MCF 10A (cell line): ENCODE measurements at regions of chr12 and their contacts with region 1.

Region 1: DNA sequence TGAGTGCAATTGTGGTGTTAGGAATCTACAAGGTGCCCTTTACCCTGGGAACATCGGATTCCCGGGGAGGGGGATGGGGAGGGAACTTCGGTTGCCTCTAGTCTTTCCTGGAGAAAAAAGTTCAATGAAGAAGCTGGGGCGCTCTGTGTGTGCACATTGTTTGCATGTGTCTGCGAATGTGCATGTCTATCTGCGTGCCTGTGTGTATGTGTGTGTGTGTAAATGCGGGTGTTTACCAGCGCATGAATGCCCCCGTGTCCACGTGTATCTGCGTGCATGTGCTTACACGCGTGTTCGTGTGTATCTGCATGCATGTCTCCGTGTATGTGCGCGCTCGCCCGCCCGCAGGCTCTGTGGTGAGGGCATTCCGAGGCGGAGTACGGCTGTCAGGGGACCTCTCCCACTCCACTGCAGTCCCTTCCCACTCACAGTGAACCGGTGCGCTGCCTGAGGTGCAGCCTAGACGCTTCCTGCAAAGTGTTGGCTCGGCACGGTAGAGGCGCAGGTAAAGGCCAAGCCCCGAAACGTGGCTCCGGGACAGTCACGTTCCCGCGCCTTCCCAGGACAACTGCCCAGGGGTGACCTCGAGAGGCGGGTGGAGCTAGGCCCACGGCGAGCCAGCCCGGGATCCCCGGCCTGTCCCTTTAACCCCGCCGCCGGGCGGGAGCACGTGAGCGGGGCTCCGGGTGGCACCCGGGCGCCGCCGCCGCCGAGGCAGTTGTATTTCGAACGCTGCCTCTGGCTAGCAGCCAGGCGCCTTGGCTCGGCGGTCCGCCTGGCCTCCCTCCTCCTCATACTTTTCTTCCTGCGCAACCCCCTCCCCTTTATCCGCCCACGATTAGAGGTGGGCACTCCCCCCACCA is 539 bp upstream of the HMGA2 start:
- DNase-seq: peak; percentile 85
- H3K4me3 Mint-ChIP-seq: peak overlapping the region; percentile 94
- H3K27ac Mint-ChIP-seq: peak overlapping the region; percentile 90
- H3K4me1 Mint-ChIP-seq: peaks cover 35% of the 10 kb centered on the region
- H3K27me3 Mint-ChIP-seq: no peaks in the 10 kb centered on the region
- CTCF ChIP-seq: no peak

Region 2: DNA sequence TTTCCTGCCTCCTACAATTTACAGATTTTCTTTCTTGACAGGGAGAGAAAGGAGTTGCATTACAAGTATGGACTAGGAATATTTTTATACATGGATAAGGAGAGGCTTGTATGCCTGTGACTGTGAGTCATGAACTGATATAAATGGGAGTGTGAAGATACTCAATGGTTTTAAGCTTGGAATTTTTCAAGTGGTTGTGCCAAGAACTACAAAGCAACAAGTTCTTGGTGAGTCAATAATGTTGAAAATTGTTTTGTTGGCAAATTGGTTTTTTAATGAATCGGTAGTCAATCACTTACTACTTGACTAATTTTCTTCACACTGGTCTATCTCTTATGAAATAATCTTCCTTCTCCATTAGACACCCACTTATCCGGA is 58.3 kb before region 1 on chr12:
- CTCF ChIA-PET with region 1: no interaction called
- POLR2A ChIA-PET with region 1: interaction called, 23 read pairs
- intact Hi-C with region 1: no loop called
- DNase-seq: peak; percentile 78
- H3K4me3 Mint-ChIP-seq: peak overlapping the region; percentile 52
- H3K27ac Mint-ChIP-seq: peak overlapping the region; percentile 67
- H3K4me1 Mint-ChIP-seq: peaks cover 30% of the 10 kb centered on the region
- H3K27me3 Mint-ChIP-seq: no peaks in the 10 kb centered on the region
- CTCF ChIP-seq: no peak

Region 3: GRCh38 chr12:65868133-65868705 is 44.5 kb after region 1 on chr12:
- CTCF ChIA-PET with region 1: no interaction called
- POLR2A ChIA-PET with region 1: interaction called, 72 read pairs
- intact Hi-C with region 1: no loop called
- DNase-seq: peak; percentile 96
- H3K4me3 Mint-ChIP-seq: peak overlapping the region; percentile 70
- H3K27ac Mint-ChIP-seq: peak overlapping the region; percentile 79
- H3K4me1 Mint-ChIP-seq: peaks cover 53% of the 10 kb centered on the region
- H3K27me3 Mint-ChIP-seq: no peaks in the 10 kb centered on the region
- CTCF ChIP-seq: no peak

Region 4: DNA sequence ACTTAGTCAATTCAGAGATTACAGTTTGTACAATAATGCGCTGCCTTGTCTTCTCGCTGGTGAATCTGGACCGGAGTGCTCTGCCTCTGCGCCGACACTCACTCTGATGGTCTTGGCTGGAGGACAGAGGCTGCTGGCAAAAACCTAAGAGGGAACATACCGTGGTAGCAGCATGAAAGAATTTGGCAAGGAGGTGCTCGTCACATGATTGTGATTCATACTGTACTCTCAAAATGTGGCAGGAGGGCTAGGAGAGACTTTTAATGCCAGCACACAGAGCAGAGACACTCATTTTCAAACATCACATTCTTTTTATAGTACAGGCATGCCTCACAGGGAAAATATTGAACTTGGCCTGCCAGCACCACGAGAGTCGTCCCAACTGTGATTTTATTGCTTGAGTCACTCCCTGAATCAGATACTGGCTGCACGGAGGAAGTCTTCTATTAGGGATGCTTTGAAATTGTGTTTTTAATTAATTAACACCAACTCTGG is 68.3 kb after region 1 on chr12:
- CTCF ChIA-PET with region 1: interaction called, 3 read pairs
- POLR2A ChIA-PET with region 1: interaction called, 16 read pairs
- intact Hi-C with region 1: loop called (anchors 5 kb)
- DNase-seq: peak; percentile 97
- H3K4me3 Mint-ChIP-seq: peak overlapping the region; percentile 55
- H3K27ac Mint-ChIP-seq: peak overlapping the region; percentile 69
- H3K4me1 Mint-ChIP-seq: peaks cover 64% of the 10 kb centered on the region
- H3K27me3 Mint-ChIP-seq: no peaks in the 10 kb centered on the region
- CTCF ChIP-seq: no peak

Region 5: GRCh38 chr12:65918021-65918420 is 94.3 kb after region 1 on chr12:
- CTCF ChIA-PET with region 1: no interaction called
- POLR2A ChIA-PET with region 1: no interaction called
- intact Hi-C with region 1: no loop called
- DNase-seq: no peak
- H3K4me3 Mint-ChIP-seq: no peak overlapping the region
- H3K27ac Mint-ChIP-seq: no peak overlapping the region
- H3K4me1 Mint-ChIP-seq: peaks cover 26% of the 10 kb centered on the region
- H3K27me3 Mint-ChIP-seq: no peaks in the 10 kb centered on the region
- CTCF ChIP-seq: no peak

Region 6: DNA sequence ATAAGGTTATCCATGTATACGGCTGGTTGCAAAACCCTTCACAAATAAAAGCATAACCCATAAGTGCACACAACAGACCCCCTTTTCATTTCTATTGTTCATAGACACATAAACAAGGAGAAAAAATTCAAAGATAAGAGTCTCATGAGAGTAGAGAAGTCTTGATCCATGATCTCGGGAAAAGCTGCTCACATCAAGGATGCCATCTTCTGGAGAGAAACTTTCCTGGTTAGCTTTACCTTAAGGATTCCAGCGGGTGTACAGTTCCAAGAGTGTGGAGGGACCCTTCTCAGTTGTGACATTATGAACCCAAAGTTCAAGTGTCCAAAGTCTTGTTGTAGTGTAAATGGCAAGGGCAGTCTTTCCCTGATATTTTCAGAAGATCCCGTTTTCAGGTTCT is 162.3 kb after region 1 on chr12:
- CTCF ChIA-PET with region 1: no interaction called
- POLR2A ChIA-PET with region 1: no interaction called
- intact Hi-C with region 1: loop called (anchors 5 kb)
- DNase-seq: no peak
- H3K4me3 Mint-ChIP-seq: no peak overlapping the region
- H3K27ac Mint-ChIP-seq: no peak overlapping the region
- H3K4me1 Mint-ChIP-seq: peaks cover 5% of the 10 kb centered on the region
- H3K27me3 Mint-ChIP-seq: no peaks in the 10 kb centered on the region
- CTCF ChIP-seq: no peak

Region 7: GRCh38 chr12:66107451-66107915 is 283.7 kb after region 1 on chr12:
- CTCF ChIA-PET with region 1: no interaction called
- POLR2A ChIA-PET with region 1: no interaction called
- intact Hi-C with region 1: loop called (anchors 5 kb)
- DNase-seq: peak; percentile 98
- H3K4me3 Mint-ChIP-seq: no peak overlapping the region
- H3K27ac Mint-ChIP-seq: no peak overlapping the region
- H3K4me1 Mint-ChIP-seq: peaks cover 16% of the 10 kb centered on the region
- H3K27me3 Mint-ChIP-seq: no peaks in the 10 kb centered on the region
- CTCF ChIP-seq: peak; percentile 62